Right lobe of liver (tissue), 6 donors: ENCODE measurements at regions of chr20 and their contacts with region 1.

Region 1: GRCh38 chr20:40741507-40742106 is 52.6 kb upstream of the MAFB start:
- DNase-seq: peak in 2 of 3 donors; percentile 39 to 68
- ATAC-seq: peak; percentile 73 to 82 (median 74)
- H3K4me3 ChIP-seq: no peak overlapping the region
- H3K27ac ChIP-seq: no peak overlapping the region
- H3K4me1 ChIP-seq: no peaks in the 10 kb centered on the region
- H3K27me3 ChIP-seq: no peaks in the 10 kb centered on the region
- CTCF ChIP-seq: peak; percentile 43 to 83 (median 65)
- POLR2A ChIP-seq: no peak

Region 2: DNA sequence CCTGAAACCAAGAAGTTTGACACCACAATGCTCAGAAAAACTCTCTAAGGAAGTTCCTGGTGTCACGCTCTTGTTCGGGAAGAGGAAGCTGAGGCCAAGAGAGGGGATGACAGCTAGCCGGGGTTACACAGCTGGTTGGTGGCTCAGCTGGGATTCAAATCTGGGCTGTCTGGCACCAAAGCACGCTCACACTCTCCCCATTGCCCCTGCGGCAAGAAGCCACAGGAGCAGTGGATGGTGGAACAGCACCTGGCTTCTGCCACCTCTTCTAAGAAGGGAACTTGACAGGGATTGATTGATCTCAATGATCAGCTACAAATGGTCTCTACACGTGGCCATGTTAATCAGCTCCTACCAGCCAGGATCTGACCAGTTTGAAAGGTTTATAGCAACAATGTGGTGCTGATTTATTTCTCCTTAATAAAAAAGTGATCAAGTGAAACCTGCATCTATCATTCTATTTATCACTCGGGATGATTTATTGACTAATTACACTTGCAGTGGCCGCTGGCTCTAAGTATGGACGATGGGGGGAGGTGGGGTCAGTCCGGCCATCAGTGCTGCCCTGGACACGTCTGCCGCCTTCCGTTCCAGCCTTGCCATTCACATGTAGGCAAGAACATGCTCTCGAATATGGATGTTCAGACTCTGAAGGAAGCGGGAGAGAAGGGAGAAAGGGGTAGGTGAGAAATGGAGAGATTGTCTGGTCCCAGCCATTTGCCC is 215.1 kb after region 1 on chr20:
- intact Hi-C with region 1: loop called (anchors 5 to 10 kb)
- DNase-seq: no peak
- ATAC-seq: peak in 3 of 4 donors; percentile 47 to 66 (median 50)
- H3K4me3 ChIP-seq: no peak overlapping the region
- H3K27ac ChIP-seq: no peak overlapping the region
- H3K4me1 ChIP-seq: no peaks in the 10 kb centered on the region
- H3K27me3 ChIP-seq: no peaks in the 10 kb centered on the region
- CTCF ChIP-seq: no peak
- POLR2A ChIP-seq: no peak

Region 3: DNA sequence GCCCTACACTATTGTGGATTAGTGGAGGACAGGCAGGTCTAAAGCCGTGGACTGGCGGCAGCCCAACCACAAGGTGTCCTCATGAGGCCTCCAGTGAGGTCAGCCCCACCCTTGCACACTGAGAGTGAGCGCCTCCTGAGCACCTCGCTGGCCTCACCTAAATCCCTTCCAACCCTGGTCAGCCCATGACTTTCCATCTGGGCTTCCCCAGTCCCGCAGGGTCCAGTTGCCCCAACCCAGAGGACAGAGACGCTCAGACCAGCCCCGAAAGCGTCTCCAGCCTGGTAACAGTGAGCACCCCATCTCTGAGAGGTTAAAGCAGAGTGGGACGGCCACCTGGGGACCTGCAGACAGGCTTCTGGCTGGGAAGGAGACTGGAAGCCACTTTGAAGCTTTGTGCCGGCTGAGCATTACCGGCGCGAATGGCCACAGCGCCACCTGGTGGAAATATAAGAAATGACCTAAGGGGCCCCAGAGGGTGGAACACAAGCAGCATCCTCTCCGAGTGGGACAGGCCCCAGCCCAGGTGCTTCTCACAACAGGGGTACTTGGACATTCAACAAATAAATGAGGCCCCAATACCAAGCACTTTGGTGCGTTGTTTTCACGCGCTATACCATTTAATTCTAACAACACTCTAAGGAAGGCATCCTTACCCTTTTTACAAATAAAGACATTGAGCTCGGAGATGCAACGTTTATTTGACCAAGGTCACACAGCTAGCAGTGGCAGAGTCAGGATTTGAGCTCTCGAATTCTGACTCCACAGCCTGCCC is 221.3 kb after region 1 on chr20:
- intact Hi-C with region 1: loop called (anchors 5 to 10 kb)
- DNase-seq: peak; percentile 69 to 78 (median 74)
- ATAC-seq: peak; percentile 90 to 95 (median 94)
- H3K4me3 ChIP-seq: no peak overlapping the region
- H3K27ac ChIP-seq: no peak overlapping the region
- H3K4me1 ChIP-seq: no peaks in the 10 kb centered on the region
- H3K27me3 ChIP-seq: no peaks in the 10 kb centered on the region
- CTCF ChIP-seq: peak; percentile 73 to 96 (median 94)
- POLR2A ChIP-seq: no peak